ENCODE measurements at regions of chr12 and their contacts with region 1.

Region 1: DNA sequence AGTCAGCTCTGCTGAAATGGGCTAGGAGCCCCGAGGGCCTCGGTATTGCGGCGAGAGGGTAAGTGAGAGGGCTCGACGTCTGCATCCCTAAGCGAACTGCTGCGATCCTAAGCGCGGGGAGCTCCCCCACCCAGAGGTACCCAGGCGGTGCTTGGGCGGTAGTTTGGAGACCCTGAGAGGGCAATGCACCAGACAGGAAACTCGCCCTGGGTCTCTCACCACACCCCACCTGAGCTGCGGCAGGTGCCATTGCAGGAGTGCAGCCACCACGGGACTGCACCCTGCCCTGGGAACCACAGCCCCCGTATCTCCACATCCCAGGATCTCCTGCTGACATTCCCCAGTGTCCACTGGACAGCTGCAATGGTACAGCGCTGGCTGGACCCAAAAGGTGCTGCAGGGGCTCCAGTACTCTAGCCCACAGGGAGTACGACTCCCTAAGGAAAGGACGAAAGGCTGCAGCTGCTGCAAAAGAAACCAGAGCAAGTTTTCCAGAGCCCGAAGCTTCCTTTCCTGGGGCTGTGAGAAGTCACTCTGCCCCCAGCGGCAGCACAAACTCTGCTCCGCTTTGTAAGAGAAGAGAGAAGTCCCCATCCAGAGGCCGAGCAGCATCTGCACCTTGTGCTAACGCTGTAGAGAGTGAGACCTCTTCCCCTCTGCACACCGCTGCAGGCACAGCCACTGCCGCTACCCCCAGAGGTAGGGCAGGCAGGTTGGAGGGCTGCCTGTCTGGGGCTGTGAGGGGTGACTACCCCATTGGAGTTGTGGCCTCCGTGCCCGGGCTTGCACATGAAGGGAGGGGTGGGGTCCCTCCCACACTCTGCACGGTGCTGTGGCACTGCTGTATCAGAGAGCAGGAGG is 31.1 kb upstream of the MON2 start:
- DNase-seq: peak; percentile 65
- CTCF ChIP-seq: peak; percentile 59

Region 2: DNA sequence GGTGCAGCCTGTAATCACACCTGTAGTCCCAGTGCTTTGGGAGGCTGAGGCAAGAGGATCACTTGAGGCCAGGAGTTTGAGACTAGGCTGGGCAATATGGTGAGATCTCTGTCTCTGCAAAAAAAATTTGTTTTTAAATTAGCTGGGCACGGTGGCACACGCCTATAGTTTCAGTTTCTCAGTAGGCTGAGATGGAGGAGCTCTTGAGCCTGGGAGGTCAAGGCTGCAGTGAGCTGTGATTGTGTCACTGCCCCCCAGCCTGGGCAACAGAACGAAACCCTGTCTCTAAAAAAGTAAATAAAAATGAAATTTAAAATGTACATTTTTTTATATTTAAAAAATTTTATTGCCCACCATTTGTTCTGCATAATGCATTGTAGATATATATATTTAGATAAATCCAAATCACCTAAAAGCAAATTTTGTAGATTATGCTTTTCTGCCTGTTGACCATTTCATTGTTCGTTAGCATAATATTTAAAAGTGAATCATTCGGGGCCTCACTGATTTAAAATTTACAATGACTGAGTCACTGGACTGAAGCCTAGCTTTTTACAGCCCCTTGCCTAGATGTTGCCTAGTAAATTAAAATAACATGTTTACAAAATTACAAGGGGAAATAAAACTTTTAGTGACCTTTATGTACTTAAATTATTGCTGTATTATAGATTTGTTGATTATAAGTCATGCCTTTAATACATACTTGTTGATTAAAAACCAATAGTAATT is 87.4 kb before region 1 on chr12:
- CTCF ChIA-PET with region 1: no interaction called
- POLR2A ChIA-PET with region 1: no interaction called
- DNase-seq: no peak
- CTCF ChIP-seq: no peak

Region 3: GRCh38 chr12:62396750-62397149 is 38.8 kb before region 1 on chr12:
- CTCF ChIA-PET with region 1: no interaction called
- POLR2A ChIA-PET with region 1: no interaction called
- DNase-seq: no peak
- CTCF ChIP-seq: no peak

Region 4: GRCh38 chr12:62414180-62414579 is 21.4 kb before region 1 on chr12:
- CTCF ChIA-PET with region 1: interaction called, 17 read pairs
- POLR2A ChIA-PET with region 1: no interaction called
- DNase-seq: no peak
- CTCF ChIP-seq: no peak

Region 5: GRCh38 chr12:62458626-62459025 is 23.1 kb after region 1 on chr12:
- CTCF ChIA-PET with region 1: interaction called, 12 read pairs
- POLR2A ChIA-PET with region 1: no interaction called
- DNase-seq: no peak
- CTCF ChIP-seq: no peak

Region 6: DNA sequence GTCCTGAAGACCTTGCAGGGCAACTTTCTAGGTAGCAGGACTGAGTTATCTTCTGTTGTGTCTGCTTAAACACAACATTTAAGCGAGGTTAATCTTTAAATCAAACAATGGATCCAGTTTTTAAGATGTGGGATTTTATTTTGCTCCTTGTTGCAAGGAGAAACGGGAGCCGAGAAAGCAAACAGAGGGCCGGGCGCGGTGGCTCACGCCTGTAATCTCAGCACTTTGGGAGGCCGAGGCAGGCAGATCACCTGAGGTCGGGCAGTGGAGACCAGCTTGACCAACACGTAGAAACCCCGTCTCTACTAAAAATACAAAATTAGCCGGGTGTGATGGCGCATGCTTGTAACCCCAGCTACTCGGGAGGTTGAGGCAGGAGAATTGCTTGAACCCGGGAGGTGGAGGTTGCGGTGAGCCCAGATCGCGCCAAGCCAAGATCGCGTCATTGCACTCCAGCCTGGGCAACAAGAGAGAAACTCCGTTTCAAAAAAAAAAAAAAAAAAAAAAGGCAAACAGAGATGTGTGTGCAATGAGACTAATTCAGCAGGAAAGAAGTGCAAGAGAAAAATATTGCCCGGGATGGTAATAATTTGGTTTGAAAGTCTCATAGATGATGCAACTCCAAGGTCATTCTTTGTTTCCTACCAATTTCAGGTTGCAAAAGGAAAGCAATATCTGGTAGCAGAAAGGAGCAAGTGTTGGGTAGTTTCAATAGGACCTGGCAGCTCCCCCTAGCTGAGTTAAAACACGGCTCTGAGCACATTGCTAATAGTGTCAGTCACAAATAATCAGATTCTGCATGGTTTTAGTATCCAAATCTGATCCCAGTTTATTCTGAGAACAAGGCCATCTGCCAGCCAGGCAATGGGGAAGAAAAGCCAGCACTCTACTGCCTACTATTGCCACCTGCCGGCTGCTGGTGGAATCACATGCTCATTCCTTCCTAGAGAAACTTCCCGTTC is 358.0 kb after region 1 on chr12:
- CTCF ChIA-PET with region 1: interaction called, 161 read pairs
- POLR2A ChIA-PET with region 1: no interaction called
- DNase-seq: peak; percentile 68
- CTCF ChIP-seq: peak; percentile 89

Region 7: DNA sequence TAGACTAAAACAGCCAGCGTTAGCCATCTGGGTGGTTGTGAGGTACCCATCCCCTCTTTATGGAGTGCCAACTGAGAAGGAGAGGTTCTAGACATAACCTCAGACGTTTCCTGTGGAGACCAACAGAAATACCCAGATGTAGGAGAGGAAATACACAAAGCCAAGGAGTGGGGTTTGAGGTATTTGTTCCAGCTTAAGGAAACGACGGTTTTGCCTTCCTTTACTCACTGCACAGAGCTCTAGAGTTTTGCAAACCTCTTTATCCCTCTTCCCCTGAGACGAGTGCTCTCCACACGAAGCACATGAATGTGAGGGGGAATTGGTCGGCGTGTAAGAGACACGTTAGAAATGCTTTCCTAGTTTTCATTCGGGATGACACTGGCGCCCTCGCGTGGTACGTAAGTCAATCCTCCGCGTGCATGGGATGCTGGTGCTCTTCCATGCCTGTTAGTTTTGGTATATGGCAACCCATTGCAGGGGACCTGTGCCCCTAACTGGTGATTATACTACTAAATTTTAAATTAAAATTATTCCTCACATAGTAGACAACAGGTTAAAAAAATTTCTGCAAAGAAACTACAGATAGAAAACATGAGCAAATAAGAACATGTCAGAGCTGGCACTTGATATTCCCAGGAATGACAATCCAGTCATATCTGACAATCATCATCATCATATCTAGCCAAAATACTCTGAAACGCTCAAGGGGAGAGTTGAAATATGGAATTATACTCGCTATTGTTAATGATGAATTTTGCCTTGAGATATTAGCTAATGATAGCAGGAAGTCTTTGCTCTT is 377.7 kb after region 1 on chr12:
- CTCF ChIA-PET with region 1: interaction called, 55 read pairs
- POLR2A ChIA-PET with region 1: no interaction called
- DNase-seq: peak; percentile 53
- CTCF ChIP-seq: peak; percentile 78

Measured in GM10248 (cell line).